ENCODE measurements at regions of chr14 and their contacts with region 1.

Region 1: DNA sequence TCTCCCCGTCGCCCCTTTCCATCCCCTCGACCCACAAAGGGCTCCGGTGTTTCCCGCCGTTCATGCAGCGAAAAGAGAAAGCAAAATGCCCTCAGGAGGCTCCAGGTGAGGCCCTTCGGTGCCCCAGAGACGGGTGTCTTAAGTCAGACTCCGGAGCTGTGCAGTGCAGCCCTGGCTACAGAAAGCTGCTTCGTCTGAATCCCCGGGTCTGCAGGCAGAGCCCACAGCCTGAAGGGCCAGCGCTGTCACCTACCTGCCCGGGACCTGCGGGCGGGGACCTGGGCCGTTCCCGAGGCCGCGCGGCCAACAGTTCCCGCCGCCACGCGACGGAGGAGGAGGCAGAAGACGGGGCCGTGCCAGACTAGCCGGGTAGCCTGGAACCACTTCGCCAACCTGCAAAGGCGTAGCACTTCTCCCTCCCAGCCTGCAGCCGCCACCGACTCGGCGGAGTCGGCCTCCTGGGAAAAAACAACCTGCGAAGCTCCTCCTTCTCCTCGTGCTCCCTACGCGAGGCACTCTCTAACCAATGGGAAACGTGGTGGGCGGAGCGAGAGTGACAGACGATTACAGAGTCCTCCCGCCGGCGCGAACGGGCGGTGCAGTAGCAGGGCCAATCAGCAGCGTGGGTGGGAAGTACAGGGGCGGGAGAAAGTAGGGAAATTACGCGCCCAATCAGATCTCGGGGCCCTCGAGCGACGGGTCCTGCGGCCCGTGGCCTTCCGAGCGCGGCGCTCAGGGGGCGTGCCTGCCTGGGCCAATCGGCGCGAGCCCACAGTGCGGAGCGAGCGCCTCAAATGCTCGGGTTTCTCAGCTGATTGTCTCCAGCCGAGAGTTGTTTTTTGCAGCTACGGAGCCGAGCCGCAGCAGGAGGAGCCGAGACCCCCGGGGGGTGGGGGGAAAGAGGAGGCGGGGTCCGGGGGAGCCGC is at the starts of genes GPR137C and TXNDC16:
- DNase-seq: peak; percentile 100
- H3K4me3 ChIP-seq: peak within 1 kb of the TSS; percentile 78 to 98 (median 90)
- H3K27ac ChIP-seq: peak within 1 kb of the TSS; percentile 73
- H3K4me1 ChIP-seq: peaks cover 22% of the 10 kb centered on the region
- H3K27me3 ChIP-seq: no peaks in the 10 kb centered on the region
- CTCF ChIP-seq: no peak
- total RNA-seq, gene GPR137C: 0.17 to 0.64 TPM
- total RNA-seq, gene TXNDC16: 4.0 to 4.2 TPM

Region 2: DNA sequence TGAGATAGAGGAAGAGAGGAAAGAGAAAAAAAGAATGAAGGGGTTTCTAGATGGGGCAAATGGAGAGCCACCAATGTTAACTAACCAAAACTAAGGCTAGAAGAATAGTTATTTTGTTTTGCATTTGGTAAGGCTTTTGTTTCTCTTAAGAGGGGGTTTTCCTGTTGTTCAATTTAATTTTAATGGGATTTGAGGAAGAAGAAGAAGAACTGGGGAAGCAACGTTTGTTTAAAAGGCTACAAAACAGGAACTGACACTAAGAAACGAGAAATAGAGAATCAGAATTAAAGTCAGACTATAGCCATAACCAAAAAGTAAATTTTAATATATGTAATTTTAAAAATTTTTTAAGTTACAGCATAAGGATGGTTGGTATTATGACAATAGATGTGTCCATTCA is 13.7 kb before region 1 on chr14:
- CTCF ChIA-PET with region 1: no interaction called
- dilution Hi-C with region 1: no loop called
- in situ Hi-C with region 1: no loop called
- intact Hi-C with region 1: no loop called
- DNase-seq: no peak
- H3K4me3 ChIP-seq: no peak overlapping the region
- H3K27ac ChIP-seq: no peak overlapping the region
- H3K4me1 ChIP-seq: no peaks in the 10 kb centered on the region
- H3K27me3 ChIP-seq: no peaks in the 10 kb centered on the region
- CTCF ChIP-seq: no peak

Region 3: DNA sequence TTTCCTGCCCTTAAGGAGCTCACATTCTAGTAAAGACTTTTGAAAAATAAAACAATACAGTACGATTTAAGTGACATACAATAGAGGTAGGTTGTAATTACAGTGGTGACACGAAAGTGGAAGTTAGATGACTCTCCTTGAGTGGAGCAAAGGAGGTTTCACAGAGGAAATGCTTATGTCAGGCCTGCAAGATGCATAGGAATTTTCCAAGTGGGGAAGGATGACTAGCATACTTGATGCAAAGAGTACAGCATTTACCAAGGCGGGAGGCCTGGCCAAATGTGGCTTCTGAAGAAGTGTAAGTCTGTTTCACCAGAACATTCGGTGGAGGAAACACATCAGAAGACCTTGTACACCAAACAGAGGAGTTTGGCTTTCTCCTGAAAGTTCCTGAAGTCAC is 87.8 kb after region 1 on chr14:
- CTCF ChIA-PET with region 1: no interaction called
- dilution Hi-C with region 1: no loop called
- in situ Hi-C with region 1: no loop called
- intact Hi-C with region 1: loop called (anchors 5 kb)
- DNase-seq: no peak
- H3K4me3 ChIP-seq: no peak overlapping the region
- H3K27ac ChIP-seq: no peak overlapping the region
- H3K4me1 ChIP-seq: no peaks in the 10 kb centered on the region
- H3K27me3 ChIP-seq: no peaks in the 10 kb centered on the region
- CTCF ChIP-seq: no peak

Region 4: GRCh38 chr14:52695481-52696091 is 143.3 kb after region 1 on chr14 and contains the start of gene ERO1A:
- CTCF ChIA-PET with region 1: no interaction called
- dilution Hi-C with region 1: no loop called
- in situ Hi-C with region 1: no loop called
- intact Hi-C with region 1: loop called (anchors 5 kb)
- DNase-seq: peak; percentile 92
- H3K4me3 ChIP-seq: peak within 1 kb of the TSS; percentile 57 to 98 (median 87)
- H3K27ac ChIP-seq: peak within 1 kb of the TSS; percentile 80
- H3K4me1 ChIP-seq: peaks cover 36% of the 10 kb centered on the region
- H3K27me3 ChIP-seq: no peaks in the 10 kb centered on the region
- CTCF ChIP-seq: no peak
- total RNA-seq, gene ERO1A: 67.5 to 160 TPM

Region 5: DNA sequence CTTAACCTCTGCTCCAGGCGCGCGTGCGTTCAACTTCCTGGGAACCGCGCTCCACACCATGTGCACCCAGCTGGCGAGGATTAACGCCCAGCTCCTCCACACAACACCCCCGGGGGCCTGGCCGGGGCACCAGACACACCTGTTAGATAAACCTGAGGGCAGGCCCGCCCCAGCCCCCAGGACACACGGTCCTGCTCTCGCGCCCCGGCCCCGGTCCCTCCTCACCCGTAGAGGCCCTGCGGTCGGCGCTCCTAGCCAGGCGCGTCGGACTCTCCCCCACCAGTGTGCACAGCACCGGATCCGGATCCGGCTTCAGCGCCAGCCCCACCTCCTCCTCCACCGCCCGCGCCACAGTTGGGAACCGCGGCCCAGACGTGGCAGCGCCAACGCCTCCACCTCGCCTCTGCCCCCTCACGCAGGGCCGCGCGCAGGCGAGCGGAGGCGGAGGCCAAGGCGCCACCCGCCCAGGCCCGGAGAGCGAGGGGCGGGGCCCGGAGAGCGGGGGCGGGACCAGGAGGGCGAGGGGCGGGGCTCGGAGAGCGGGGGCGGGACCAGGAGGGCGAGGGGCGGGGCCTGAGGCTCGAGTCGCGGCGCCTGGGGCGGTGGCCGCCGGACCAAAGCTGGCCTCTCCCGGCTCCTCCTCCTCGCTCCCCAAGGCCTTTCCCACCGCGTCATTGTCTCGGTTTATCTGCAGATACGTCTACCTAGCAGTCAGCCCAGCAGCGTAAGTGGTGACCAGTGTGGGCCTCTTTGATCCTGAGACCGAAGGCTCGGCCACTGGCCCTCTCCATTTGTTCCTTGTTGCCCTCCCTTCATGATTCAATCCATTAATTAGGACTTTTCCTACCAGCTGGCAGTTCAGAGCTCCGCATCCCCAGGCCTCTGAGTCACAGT is 239.1 kb after region 1 on chr14 and contains the start of gene GNPNAT1:
- CTCF ChIA-PET with region 1: no interaction called
- dilution Hi-C with region 1: no loop called
- in situ Hi-C with region 1: no loop called
- intact Hi-C with region 1: loop called (anchors 2 kb)
- DNase-seq: peak; percentile 90
- H3K4me3 ChIP-seq: peak within 1 kb of the TSS; percentile 79 to 91 (median 87)
- H3K27ac ChIP-seq: peak within 1 kb of the TSS; percentile 89
- H3K4me1 ChIP-seq: peaks cover 9% of the 10 kb centered on the region
- H3K27me3 ChIP-seq: no peaks in the 10 kb centered on the region
- CTCF ChIP-seq: no peak
- total RNA-seq, gene GNPNAT1: 24.0 to 44.9 TPM